Endothelial cell of umbilical vein (primary cell): ENCODE measurements at regions of chr5 and their contacts with region 1.

Region 1: GRCh38 chr5:148383564-148384379 is at the start of gene FBXO38:
- DNase-seq: peak; percentile 97
- H3K4me3 ChIP-seq: peak within 1 kb of the TSS; percentile 66 to 97 (median 69)
- H3K27ac ChIP-seq: peak within 1 kb of the TSS; percentile 97
- H3K4me1 ChIP-seq: peaks cover 58% of the 10 kb centered on the region
- H3K27me3 ChIP-seq: no peaks in the 10 kb centered on the region
- CTCF ChIP-seq: no peak
- POLR2A ChIP-seq: peak; percentile 79
- total RNA-seq, gene FBXO38: 52.9 and 65.6 TPM in 2 replicates

Region 2: DNA sequence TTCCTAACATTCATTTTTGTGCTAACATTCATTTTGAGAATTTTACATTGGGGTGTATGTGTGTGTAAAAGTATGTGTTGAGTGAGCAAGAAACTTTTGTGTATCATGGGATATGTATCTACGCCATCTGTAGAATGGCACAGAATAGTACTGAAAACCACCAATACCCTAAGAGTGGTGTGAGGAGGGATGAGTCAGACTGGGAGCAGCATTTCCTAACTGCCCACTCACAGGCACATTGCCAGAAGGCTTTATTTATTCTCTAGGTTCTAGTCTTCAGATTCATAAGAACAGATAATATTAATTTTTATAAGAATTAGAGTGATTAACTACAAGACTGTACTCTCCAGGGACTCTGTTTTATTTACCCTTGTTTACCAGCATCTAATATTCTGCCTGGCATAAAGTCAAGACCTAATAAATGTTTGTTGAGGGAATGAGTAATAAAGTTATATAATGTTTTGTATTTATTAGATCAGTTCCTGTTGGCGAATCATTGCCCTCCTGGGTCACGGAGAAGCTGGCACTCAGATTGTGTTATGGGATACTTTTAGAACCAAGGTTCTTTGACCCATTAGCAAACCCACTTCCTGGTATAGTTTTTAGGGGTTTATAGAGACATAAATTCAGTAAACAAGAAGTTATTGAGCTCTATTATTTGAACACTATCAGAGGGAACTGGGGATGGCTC is 1346.1 kb before region 1 on chr5:
- CTCF ChIA-PET with region 1: no interaction called
- POLR2A ChIA-PET with region 1: no interaction called
- dilution Hi-C with region 1: no loop called
- intact Hi-C with region 1: no loop called
- DNase-seq: peak; percentile 13
- H3K4me3 ChIP-seq: no peak overlapping the region
- H3K27ac ChIP-seq: no peak overlapping the region
- H3K4me1 ChIP-seq: peaks cover 4% of the 10 kb centered on the region
- H3K27me3 ChIP-seq: no peaks in the 10 kb centered on the region
- CTCF ChIP-seq: no peak
- POLR2A ChIP-seq: no peak

Region 3: GRCh38 chr5:147113967-147114366 is 1269.8 kb before region 1 on chr5:
- CTCF ChIA-PET with region 1: no interaction called
- POLR2A ChIA-PET with region 1: no interaction called
- dilution Hi-C with region 1: no loop called
- intact Hi-C with region 1: no loop called
- DNase-seq: no peak
- H3K4me3 ChIP-seq: no peak overlapping the region
- H3K27ac ChIP-seq: no peak overlapping the region
- H3K4me1 ChIP-seq: no peaks in the 10 kb centered on the region
- H3K27me3 ChIP-seq: no peaks in the 10 kb centered on the region
- CTCF ChIP-seq: no peak
- POLR2A ChIP-seq: no peak

Region 4: GRCh38 chr5:147892821-147893232 is 490.9 kb before region 1 on chr5:
- CTCF ChIA-PET with region 1: no interaction called
- POLR2A ChIA-PET with region 1: no interaction called
- dilution Hi-C with region 1: no loop called
- intact Hi-C with region 1: loop called (anchors 5 kb)
- DNase-seq: peak; percentile 61
- H3K4me3 ChIP-seq: no peak overlapping the region
- H3K27ac ChIP-seq: peak overlapping the region; percentile 81
- H3K4me1 ChIP-seq: peaks cover 26% of the 10 kb centered on the region
- H3K27me3 ChIP-seq: no peaks in the 10 kb centered on the region
- CTCF ChIP-seq: no peak
- POLR2A ChIP-seq: no peak

Region 5: DNA sequence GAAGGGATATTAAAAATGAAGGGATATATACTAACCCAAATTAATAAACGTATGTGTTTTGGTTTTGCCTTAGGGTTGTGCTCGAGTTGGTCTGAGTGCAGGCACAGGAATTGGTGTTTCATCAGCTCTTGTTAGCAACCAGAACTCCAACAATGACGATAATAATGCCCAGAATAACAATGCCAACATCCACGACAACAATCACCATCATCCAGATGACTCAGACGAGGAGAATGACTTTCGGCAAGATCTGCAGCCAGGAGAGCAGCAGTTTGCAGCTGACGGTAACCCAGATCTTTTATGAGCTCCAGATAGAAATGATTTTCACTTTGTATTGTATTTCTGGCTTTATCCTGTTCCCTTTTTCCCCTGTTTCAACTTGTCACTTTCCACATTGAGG is 33.1 kb after region 1 on chr5:
- CTCF ChIA-PET with region 1: no interaction called
- POLR2A ChIA-PET with region 1: interaction called, 3 read pairs
- dilution Hi-C with region 1: no loop called
- intact Hi-C with region 1: loop called (anchors 1 kb)
- DNase-seq: peak; percentile 97
- H3K4me3 ChIP-seq: no peak overlapping the region
- H3K27ac ChIP-seq: peak overlapping the region; percentile 92
- H3K4me1 ChIP-seq: peaks cover 14% of the 10 kb centered on the region
- H3K27me3 ChIP-seq: no peaks in the 10 kb centered on the region
- CTCF ChIP-seq: no peak
- POLR2A ChIP-seq: no peak

Region 6: DNA sequence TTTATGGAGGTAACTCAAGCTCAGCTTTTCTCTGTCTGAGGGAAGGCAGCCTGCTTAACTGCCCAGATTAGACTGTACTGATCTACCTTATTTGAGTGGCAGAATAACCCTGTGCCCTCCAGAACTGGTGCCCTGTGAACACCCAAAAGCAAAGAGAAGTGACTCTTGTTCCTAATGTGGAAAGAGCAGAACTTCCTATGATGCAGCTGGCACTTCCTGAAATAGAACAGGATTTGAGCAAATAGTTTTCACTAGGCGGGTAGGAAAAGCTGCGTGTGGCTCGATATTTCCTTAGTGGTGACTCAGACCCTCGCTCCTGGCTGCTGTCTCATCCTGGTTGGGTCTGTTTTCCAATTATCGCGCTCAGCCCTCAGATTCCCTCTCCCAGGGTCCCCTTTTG is 589.2 kb after region 1 on chr5:
- CTCF ChIA-PET with region 1: no interaction called
- POLR2A ChIA-PET with region 1: no interaction called
- dilution Hi-C with region 1: no loop called
- intact Hi-C with region 1: loop called (anchors 5 kb)
- DNase-seq: peak; percentile 92
- H3K4me3 ChIP-seq: no peak overlapping the region
- H3K27ac ChIP-seq: peak overlapping the region; percentile 99
- H3K4me1 ChIP-seq: peaks cover 46% of the 10 kb centered on the region
- H3K27me3 ChIP-seq: no peaks in the 10 kb centered on the region
- CTCF ChIP-seq: no peak
- POLR2A ChIP-seq: peak; percentile 69